Activated CD8-positive, alpha-beta T cell treated with anti-CD3 and anti-CD28 coated beads for 36 hours (primary cell): ENCODE measurements at regions of chr6 and their contacts with region 1.

Region 1: DNA sequence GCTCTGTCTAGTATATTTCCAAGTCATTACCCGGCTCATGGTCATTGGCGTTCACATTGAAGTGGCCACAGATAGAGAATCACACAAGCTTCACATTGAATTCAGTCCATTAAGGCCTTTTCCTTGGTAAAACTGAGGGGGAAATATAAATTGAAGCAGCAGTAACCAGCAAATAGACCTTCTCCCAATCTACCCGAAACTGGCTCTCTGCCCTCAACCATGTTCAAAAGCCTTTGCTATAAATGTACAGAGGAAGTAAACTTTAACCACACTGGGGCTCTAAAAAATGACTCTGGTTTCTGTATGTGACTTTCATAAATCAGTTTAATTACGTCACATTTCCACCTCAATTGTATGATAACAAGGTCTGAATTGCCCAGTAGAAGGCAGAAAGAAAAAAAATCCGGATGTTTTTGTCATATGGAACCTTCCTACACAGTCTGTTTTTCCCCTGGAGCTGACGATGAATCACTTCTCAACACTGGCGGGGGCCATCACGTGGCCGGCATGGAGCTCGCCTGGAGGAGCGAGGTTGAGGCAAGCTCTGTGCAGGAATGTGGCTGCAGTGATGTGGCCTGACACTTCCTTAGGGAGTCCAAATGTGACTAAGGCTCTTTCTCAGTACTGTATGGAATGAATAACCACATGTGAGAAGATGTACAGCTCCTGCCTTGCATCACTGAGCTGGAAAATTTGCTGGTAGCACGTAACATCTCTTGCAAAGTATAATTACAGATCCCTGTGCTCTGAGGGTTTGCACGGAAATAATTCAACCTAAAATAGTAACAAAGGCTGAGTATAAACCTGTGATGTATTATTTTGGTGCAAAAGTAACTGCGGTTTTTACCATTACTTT is 58.6 kb upstream of the SNX9 start:
- DNase-seq: peak; percentile 88
- ATAC-seq: peak; percentile 58
- H3K4me3 Mint-ChIP-seq: peak overlapping the region; percentile 40
- H3K27ac Mint-ChIP-seq: peak overlapping the region; percentile 97
- H3K4me1 Mint-ChIP-seq: peaks cover 87% of the 10 kb centered on the region
- H3K27me3 Mint-ChIP-seq: no peaks in the 10 kb centered on the region
- CTCF ChIP-seq: no peak

Region 2: GRCh38 chr6:157800420-157801237 is 36.2 kb after region 1 on chr6:
- CTCF ChIA-PET with region 1: interaction called, 26 read pairs
- POLR2A ChIA-PET with region 1: interaction called, 23 read pairs
- intact Hi-C with region 1: loop called (anchors 2 kb)
- DNase-seq: peak; percentile 78
- ATAC-seq: peak; percentile 84
- H3K4me3 Mint-ChIP-seq: peak overlapping the region; percentile 26
- H3K27ac Mint-ChIP-seq: peak overlapping the region; percentile 83
- H3K4me1 Mint-ChIP-seq: peaks cover 68% of the 10 kb centered on the region
- H3K27me3 Mint-ChIP-seq: no peaks in the 10 kb centered on the region
- CTCF ChIP-seq: no peak

Region 3: DNA sequence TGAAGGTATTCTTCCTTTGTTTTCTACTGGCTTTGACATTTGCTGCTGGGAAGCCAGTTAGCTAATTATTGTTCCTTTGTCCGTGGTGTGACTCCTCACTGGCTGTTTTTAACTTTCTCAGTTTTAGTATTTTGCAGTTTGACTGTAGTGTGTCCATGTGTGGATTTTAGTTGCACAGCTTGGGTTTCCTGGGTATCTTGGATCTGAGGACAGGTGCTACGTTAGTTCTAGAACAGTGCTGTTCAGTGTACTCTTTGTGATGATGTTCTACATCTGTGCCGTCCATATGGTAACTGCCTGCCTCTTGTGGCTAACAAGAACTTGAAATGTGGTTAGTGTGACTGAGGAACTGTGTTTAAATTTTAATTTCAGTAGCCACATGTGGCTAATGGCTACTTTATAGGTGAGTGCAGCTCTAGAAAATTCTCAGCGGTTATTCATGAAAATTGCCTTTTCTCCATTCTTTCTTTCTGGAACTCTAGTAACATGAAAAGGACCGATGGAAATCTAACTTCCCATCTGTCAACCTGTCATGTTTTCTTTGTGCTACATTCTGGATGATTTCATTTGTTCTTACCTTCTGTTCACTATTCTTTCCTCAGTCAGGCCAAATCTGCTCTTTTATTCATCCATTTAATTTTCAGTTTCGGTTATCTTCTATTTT is 66.1 kb after region 1 on chr6:
- CTCF ChIA-PET with region 1: interaction called, 5 read pairs
- POLR2A ChIA-PET with region 1: interaction called, 102 read pairs
- intact Hi-C with region 1: no loop called
- DNase-seq: no peak
- ATAC-seq: peak; percentile 47
- H3K4me3 Mint-ChIP-seq: peak overlapping the region; percentile 49
- H3K27ac Mint-ChIP-seq: peak overlapping the region; percentile 89
- H3K4me1 Mint-ChIP-seq: peaks cover 73% of the 10 kb centered on the region
- H3K27me3 Mint-ChIP-seq: no peaks in the 10 kb centered on the region
- CTCF ChIP-seq: no peak

Region 4: GRCh38 chr6:157861814-157862213 is 97.4 kb after region 1 on chr6:
- CTCF ChIA-PET with region 1: interaction called, 4 read pairs
- POLR2A ChIA-PET with region 1: interaction called, 5 read pairs
- intact Hi-C with region 1: loop called (anchors 2 kb)
- DNase-seq: no peak
- ATAC-seq: no peak
- H3K4me3 Mint-ChIP-seq: no peak overlapping the region
- H3K27ac Mint-ChIP-seq: no peak overlapping the region
- H3K4me1 Mint-ChIP-seq: peaks cover 74% of the 10 kb centered on the region
- H3K27me3 Mint-ChIP-seq: no peaks in the 10 kb centered on the region
- CTCF ChIP-seq: no peak